Activated CD4-positive, alpha-beta T cell treated with anti-CD3 and anti-CD28 coated beads for 36 hours (primary cell): ENCODE measurements at regions of chr17 and their contacts with region 1.

Region 1: DNA sequence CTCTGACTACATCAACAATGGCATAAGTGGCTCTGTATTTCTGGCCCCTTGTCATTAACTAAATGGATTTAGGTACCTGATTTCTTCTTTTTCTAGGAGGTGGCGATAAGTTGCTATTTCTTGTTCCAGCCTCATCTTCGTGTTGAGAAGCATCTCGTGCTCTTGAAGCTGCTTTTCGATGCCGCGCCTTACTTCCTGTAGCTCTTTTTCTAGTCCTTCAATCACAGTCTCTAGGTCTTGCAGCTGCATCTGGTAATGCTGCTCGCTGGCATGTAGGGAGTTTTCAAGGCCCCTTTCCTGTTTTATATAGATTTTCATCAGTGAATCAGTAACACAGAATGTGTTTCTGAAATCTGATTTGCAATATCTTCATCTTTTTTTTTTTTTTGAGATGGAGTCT is 5.1 kb downstream of the KRT222 start:
- DNase-seq: peak; percentile 25
- ATAC-seq: no peak
- H3K4me3 Mint-ChIP-seq: no peak overlapping the region
- H3K27ac Mint-ChIP-seq: no peak overlapping the region
- H3K4me1 Mint-ChIP-seq: peaks cover 8% of the 10 kb centered on the region
- H3K27me3 Mint-ChIP-seq: peaks cover 14% of the 10 kb centered on the region

Region 2: GRCh38 chr17:40675905-40676304 is 16.0 kb after region 1 on chr17:
- CTCF ChIA-PET with region 1: interaction called, 3 read pairs
- POLR2A ChIA-PET with region 1: interaction called, 11 read pairs
- intact Hi-C with region 1: no loop called
- DNase-seq: no peak
- ATAC-seq: no peak
- H3K4me3 Mint-ChIP-seq: no peak overlapping the region
- H3K27ac Mint-ChIP-seq: no peak overlapping the region
- H3K4me1 Mint-ChIP-seq: peaks cover 8% of the 10 kb centered on the region
- H3K27me3 Mint-ChIP-seq: peaks cover 24% of the 10 kb centered on the region